ENCODE measurements at regions of chrX and their contacts with region 1.

Region 1: GRCh38 chrX:119753571-119754257 is 4.7 kb upstream of the SOWAHD start:
- DNase-seq: no peak
- H3K4me3 ChIP-seq: no peak overlapping the region
- H3K27ac ChIP-seq: no peak overlapping the region
- H3K4me1 ChIP-seq: no peaks in the 10 kb centered on the region
- H3K27me3 ChIP-seq: no peaks in the 10 kb centered on the region
- CTCF ChIP-seq: peak; percentile 19 to 38 (median 32)

Region 2: DNA sequence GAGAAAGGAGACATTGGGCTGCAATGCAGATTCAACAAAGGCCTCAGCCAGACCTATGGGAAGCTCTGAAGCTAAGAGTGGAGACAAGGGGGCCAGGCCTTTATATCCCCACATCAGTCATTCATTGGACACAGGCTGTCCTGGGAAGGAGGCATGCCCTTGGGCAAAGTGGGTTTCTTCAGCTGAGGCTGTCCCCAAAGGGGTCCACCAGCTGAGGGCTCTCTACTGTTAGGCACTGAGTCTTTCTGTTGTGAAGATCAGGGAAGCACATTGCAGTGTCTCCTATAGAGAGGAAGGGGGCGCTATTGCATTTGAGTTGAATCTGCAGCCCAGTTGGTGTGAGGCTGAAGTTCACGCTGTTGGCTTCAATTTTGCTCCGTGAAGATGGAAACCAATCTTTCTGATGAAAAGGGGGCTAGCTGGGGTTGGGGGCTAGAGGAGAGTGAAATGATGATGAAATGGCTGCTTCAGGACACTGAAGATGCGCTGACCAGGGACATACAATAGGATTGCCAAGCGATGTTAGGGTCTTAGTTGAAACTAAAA is 237.5 kb before region 1 on chrX:
- dilution Hi-C with region 1: no loop called
- DNase-seq: no peak
- H3K4me3 ChIP-seq: no peak overlapping the region
- H3K27ac ChIP-seq: no peak overlapping the region
- H3K4me1 ChIP-seq: peaks cover 2% of the 10 kb centered on the region
- H3K27me3 ChIP-seq: no peaks in the 10 kb centered on the region
- CTCF ChIP-seq: peak; percentile 79 to 85 (median 84)

Region 3: GRCh38 chrX:119817130-119817690 is 63.5 kb after region 1 on chrX:
- dilution Hi-C with region 1: loop called (anchors 10 kb)
- DNase-seq: no peak
- H3K4me3 ChIP-seq: no peak overlapping the region
- H3K27ac ChIP-seq: no peak overlapping the region
- H3K4me1 ChIP-seq: no peaks in the 10 kb centered on the region
- H3K27me3 ChIP-seq: no peaks in the 10 kb centered on the region
- CTCF ChIP-seq: no peak

Region 4: GRCh38 chrX:120147537-120147936 is 393.8 kb after region 1 on chrX:
- dilution Hi-C with region 1: no loop called
- DNase-seq: no peak
- H3K4me3 ChIP-seq: no peak overlapping the region
- H3K27ac ChIP-seq: no peak overlapping the region
- H3K4me1 ChIP-seq: no peaks in the 10 kb centered on the region
- H3K27me3 ChIP-seq: no peaks in the 10 kb centered on the region
- CTCF ChIP-seq: no peak

Measured in keratinocyte (primary cell).